Activated naive CD4-positive, alpha-beta T cell treated with anti-CD3 and anti-CD28 coated beads for 36 hours (primary cell): ENCODE measurements at regions of chr19 and their contacts with region 1.

Region 1: GRCh38 chr19:49331616-49332055 is 3.6 kb upstream of the CD37 start:
- DNase-seq: peak; percentile 84
- H3K4me3 Mint-ChIP-seq: peak overlapping the region; percentile 44
- H3K27ac Mint-ChIP-seq: peak overlapping the region; percentile 81
- H3K4me1 Mint-ChIP-seq: peaks cover 74% of the 10 kb centered on the region
- H3K27me3 Mint-ChIP-seq: no peaks in the 10 kb centered on the region

Region 2: GRCh38 chr19:49255674-49256073 is 76.0 kb before region 1 on chr19:
- CTCF ChIA-PET with region 1: no interaction called
- intact Hi-C with region 1: no loop called
- DNase-seq: no peak
- H3K4me3 Mint-ChIP-seq: no peak overlapping the region
- H3K27ac Mint-ChIP-seq: no peak overlapping the region
- H3K4me1 Mint-ChIP-seq: no peaks in the 10 kb centered on the region
- H3K27me3 Mint-ChIP-seq: peaks cover 9% of the 10 kb centered on the region

Region 3: GRCh38 chr19:49363268-49364082 is 31.8 kb after region 1 on chr19 and contains the start of gene DKKL1:
- CTCF ChIA-PET with region 1: interaction called, 4 read pairs
- intact Hi-C with region 1: loop called (anchors 2 kb)
- DNase-seq: peak; percentile 92
- H3K4me3 Mint-ChIP-seq: peak within 1 kb of the TSS; percentile 13
- H3K27ac Mint-ChIP-seq: no peak within 1 kb of the TSS
- H3K4me1 Mint-ChIP-seq: peaks cover 11% of the 10 kb centered on the region
- H3K27me3 Mint-ChIP-seq: peaks cover 10% of the 10 kb centered on the region
- total RNA-seq, gene DKKL1: not detected